ENCODE measurements at regions of chr1 and their contacts with region 1.

Region 1: GRCh38 chr1:19661721-19662228 is 2.9 kb upstream of the HTR6 start:
- DNase-seq: no peak
- H3K4me3 ChIP-seq: no peak overlapping the region
- H3K27ac ChIP-seq: no peak overlapping the region
- H3K4me1 ChIP-seq: peaks cover 0 to 5% (median 0%) of the 10 kb centered on the region in 4 experiments; a peak in 4 of 7 replicates
- H3K27me3 ChIP-seq: peaks cover 28 to 38% (median 34%) of the 10 kb centered on the region in 4 experiments
- CTCF ChIP-seq: peak in 2 of 3 experiments; percentile 48 to 67; a peak in 3 of 4 replicates
- EP300 ChIP-seq: no peak
- POLR2A ChIP-seq: no peak
- RAD21 ChIP-seq: peak; percentile 67 to 71

Region 2: GRCh38 chr1:19628879-19629278 is 32.9 kb before region 1 on chr1:
- CTCF ChIA-PET with region 1: interaction called, 13 read pairs
- POLR2A ChIA-PET with region 1: no interaction called
- DNase-seq: no peak
- H3K4me3 ChIP-seq: no peak overlapping the region
- H3K27ac ChIP-seq: no peak overlapping the region
- H3K4me1 ChIP-seq: peaks cover 3 to 9% (median 5%) of the 10 kb centered on the region in 4 experiments; a peak in 5 of 7 replicates
- H3K27me3 ChIP-seq: no peaks in the 10 kb centered on the region
- CTCF ChIP-seq: no peak
- EP300 ChIP-seq: no peak
- POLR2A ChIP-seq: no peak
- RAD21 ChIP-seq: no peak

Region 3: DNA sequence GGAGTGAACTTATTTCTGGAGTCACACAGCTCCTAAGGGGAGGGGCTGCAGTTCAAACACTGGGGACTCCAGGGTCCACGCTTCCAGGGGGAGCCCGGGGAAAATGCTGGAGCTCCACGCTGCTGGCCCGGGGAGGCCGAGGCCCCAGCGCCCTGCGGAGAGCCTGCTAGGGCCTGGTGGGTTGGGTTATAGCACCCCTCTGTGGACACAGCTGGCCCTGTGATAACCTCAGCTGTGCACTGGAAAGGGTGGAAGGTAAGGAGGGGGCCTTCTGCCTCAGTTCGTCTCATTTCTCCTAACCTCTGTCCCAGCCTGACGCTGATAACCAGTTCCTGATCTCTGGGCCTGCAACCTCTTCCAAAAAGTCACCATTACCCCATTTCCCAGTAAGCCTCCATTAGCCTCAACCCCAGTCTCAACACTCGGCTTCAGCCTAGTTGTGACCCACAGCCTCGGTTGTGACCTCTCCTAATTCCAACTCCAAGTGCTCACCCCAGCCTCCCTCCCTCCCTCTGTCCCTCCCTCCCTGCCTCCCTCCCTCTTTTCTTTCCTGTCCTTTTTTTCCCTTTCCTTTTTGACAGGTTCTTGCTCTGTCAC is 10.5 kb before region 1 on chr1:
- CTCF ChIA-PET with region 1: interaction called, 24 read pairs
- POLR2A ChIA-PET with region 1: interaction called, 3 read pairs
- DNase-seq: peak in 1 of 2 experiments; percentile 71
- H3K4me3 ChIP-seq: no peak overlapping the region
- H3K27ac ChIP-seq: no peak overlapping the region
- H3K4me1 ChIP-seq: peaks cover 0 to 3% (median 2%) of the 10 kb centered on the region in 4 experiments; a peak in 4 of 7 replicates
- H3K27me3 ChIP-seq: peaks cover 0 to 4% (median 1%) of the 10 kb centered on the region in 4 experiments; a peak in 4 of 7 replicates
- CTCF ChIP-seq: peak; percentile 78 to 84 (median 78)
- EP300 ChIP-seq: no peak
- POLR2A ChIP-seq: no peak
- RAD21 ChIP-seq: peak; percentile 89 to 91

Region 4: GRCh38 chr1:19682257-19682656 is 20.5 kb after region 1 on chr1:
- CTCF ChIA-PET with region 1: interaction called, 46 read pairs
- POLR2A ChIA-PET with region 1: no interaction called
- DNase-seq: no peak
- H3K4me3 ChIP-seq: no peak overlapping the region
- H3K27ac ChIP-seq: no peak overlapping the region
- H3K4me1 ChIP-seq: peaks cover 0 to 14% (median 8%) of the 10 kb centered on the region in 4 experiments; a peak in 4 of 7 replicates
- H3K27me3 ChIP-seq: no peaks in the 10 kb centered on the region
- CTCF ChIP-seq: no peak
- EP300 ChIP-seq: no peak
- POLR2A ChIP-seq: no peak
- RAD21 ChIP-seq: no peak

Region 5: DNA sequence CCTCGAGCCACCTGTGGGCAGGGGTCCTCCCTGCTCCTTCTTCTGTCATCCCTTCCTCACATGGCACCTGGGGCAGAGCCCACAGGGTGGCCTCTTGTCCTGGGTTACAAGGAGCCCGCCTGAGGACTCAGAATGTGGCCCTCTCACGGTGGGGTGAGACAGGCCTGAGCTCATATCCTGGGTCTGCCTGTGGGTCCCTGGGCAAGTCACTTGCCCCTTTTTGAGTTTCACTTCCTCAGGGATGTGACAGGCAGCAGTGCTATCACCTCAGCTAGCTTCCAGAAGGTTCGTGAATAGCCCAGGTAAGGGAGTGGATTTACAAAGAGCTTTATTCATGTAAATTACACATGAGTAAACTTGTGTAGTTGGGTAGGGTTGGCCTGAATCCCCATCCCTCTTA is 36.4 kb after region 1 on chr1:
- CTCF ChIA-PET with region 1: interaction called, 127 read pairs
- POLR2A ChIA-PET with region 1: no interaction called
- DNase-seq: no peak
- H3K4me3 ChIP-seq: no peak overlapping the region
- H3K27ac ChIP-seq: no peak overlapping the region
- H3K4me1 ChIP-seq: no peaks in the 10 kb centered on the region; a peak in 1 of 7 replicates
- H3K27me3 ChIP-seq: no peaks in the 10 kb centered on the region
- CTCF ChIP-seq: no peak
- EP300 ChIP-seq: no peak
- POLR2A ChIP-seq: no peak
- RAD21 ChIP-seq: no peak

Region 6: DNA sequence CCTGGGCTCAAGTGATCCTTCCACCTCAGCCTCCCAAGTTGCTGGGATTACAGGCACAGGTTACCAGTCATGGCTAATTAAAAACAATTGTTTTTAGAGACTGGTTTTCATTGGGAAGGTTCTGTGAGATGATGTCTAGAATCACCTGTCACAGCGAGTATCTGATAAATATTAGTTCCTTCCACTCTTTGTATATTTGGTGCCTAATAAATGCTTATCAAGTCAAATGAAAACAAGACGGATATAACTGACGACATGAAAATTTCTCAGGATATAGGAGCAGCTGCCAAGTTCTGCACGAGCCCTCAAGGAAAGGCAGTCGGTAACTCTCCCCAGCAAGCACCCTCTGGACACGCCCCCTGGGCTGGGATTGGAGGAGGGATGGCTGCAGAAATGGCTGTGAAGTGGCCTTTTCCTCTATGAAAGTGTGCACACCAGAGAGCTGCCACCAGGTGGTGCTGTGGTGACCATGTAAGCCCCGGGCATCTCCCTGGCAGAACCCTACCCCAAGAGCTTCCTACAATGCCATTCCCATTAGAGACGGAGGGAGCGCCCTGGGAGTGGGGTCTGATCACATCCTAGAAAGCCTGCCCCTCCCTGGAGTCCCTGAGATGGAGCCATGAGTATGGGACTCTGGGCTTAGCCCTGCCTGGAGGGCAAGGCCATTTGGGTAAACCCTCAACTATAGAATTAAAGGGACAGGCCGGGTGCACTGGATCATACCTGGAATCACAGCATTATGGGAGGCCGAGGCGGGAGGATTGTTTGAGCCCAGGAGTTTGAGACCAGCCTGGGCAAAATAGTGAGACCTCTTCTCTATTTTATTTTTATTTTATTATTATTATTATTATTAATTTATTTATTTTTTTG is 53.8 kb after region 1 on chr1:
- CTCF ChIA-PET with region 1: interaction called, 12 read pairs
- POLR2A ChIA-PET with region 1: no interaction called
- DNase-seq: peak; percentile 96 to 98
- H3K4me3 ChIP-seq: no peak overlapping the region
- H3K27ac ChIP-seq: no peak overlapping the region
- H3K4me1 ChIP-seq: peaks cover 0 to 3% (median 0%) of the 10 kb centered on the region in 4 experiments; a peak in 1 of 7 replicates
- H3K27me3 ChIP-seq: no peaks in the 10 kb centered on the region
- CTCF ChIP-seq: peak; percentile 80 to 99 (median 97)
- EP300 ChIP-seq: peak in 1 of 2 experiments; percentile 23; a peak in 1 of 3 replicates
- POLR2A ChIP-seq: no peak
- RAD21 ChIP-seq: peak; percentile 69 to 77

Region 7: GRCh38 chr1:19750101-19750881 is 88.5 kb after region 1 on chr1:
- CTCF ChIA-PET with region 1: interaction called, 10 read pairs
- POLR2A ChIA-PET with region 1: no interaction called
- DNase-seq: no peak
- H3K4me3 ChIP-seq: no peak overlapping the region
- H3K27ac ChIP-seq: no peak overlapping the region
- H3K4me1 ChIP-seq: no peaks in the 10 kb centered on the region
- H3K27me3 ChIP-seq: no peaks in the 10 kb centered on the region
- CTCF ChIP-seq: no peak
- EP300 ChIP-seq: no peak
- POLR2A ChIP-seq: no peak
- RAD21 ChIP-seq: no peak

Region 8: DNA sequence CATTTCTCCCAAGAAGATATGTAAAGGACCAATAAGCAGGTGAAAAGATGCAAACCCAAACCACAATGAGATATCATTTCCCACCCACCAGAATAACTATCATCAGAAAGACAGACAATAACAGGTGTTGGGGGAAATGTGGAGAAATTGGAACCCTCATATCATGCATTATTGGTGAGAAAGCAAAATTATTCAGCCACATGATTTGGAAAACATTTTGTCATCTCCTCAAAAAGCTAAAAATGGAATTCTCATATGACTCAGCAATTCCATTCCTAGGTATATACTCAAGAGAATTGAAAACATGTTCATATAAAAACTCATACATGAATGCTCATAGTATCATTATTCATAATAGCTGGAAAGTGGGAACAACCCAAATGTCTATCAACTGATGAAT is 178.5 kb after region 1 on chr1:
- CTCF ChIA-PET with region 1: no interaction called
- POLR2A ChIA-PET with region 1: no interaction called
- DNase-seq: no peak
- H3K4me3 ChIP-seq: no peak overlapping the region
- H3K27ac ChIP-seq: no peak overlapping the region
- H3K4me1 ChIP-seq: no peaks in the 10 kb centered on the region
- H3K27me3 ChIP-seq: no peaks in the 10 kb centered on the region
- CTCF ChIP-seq: no peak
- EP300 ChIP-seq: no peak
- POLR2A ChIP-seq: no peak
- RAD21 ChIP-seq: no peak

Measured in H1 (cell line).